Activated B cell treated with CpG ODN at 0.5 μM for 24 hours (primary cell): ENCODE measurements at regions of chr12 and their contacts with region 1.

Region 1: GRCh38 chr12:104064031-104064822 is at the start of gene HCFC2:
- DNase-seq: peak; percentile 94
- ATAC-seq: peak; percentile 95
- H3K4me3 Mint-ChIP-seq: peak within 1 kb of the TSS; percentile 97
- H3K27ac Mint-ChIP-seq: peak within 1 kb of the TSS; percentile 89
- H3K4me1 Mint-ChIP-seq: peaks cover 13% of the 10 kb centered on the region
- H3K27me3 Mint-ChIP-seq: peaks cover 9% of the 10 kb centered on the region
- CTCF ChIP-seq: no peak
- total RNA-seq, gene HCFC2: 7.4 and 11.2 TPM in 2 replicates

Region 2: GRCh38 chr12:103877934-103878510 is 186.2 kb before region 1 on chr12:
- CTCF ChIA-PET with region 1: no interaction called
- POLR2A ChIA-PET with region 1: no interaction called
- intact Hi-C with region 1: loop called (anchors 2 kb)
- DNase-seq: no peak
- ATAC-seq: peak; percentile 53
- H3K4me3 Mint-ChIP-seq: no peak overlapping the region
- H3K27ac Mint-ChIP-seq: no peak overlapping the region
- H3K4me1 Mint-ChIP-seq: peaks cover 24% of the 10 kb centered on the region
- H3K27me3 Mint-ChIP-seq: no peaks in the 10 kb centered on the region
- CTCF ChIP-seq: peak; percentile 47

Region 3: GRCh38 chr12:103965590-103966504 is 98.4 kb before region 1 on chr12 and contains the start of gene TDG:
- CTCF ChIA-PET with region 1: no interaction called
- POLR2A ChIA-PET with region 1: interaction called, 14 read pairs
- intact Hi-C with region 1: loop called (anchors 1 kb)
- DNase-seq: peak; percentile 85
- ATAC-seq: peak; percentile 95
- H3K4me3 Mint-ChIP-seq: peak within 1 kb of the TSS; percentile 97
- H3K27ac Mint-ChIP-seq: peak within 1 kb of the TSS; percentile 97
- H3K4me1 Mint-ChIP-seq: peaks cover 56% of the 10 kb centered on the region
- H3K27me3 Mint-ChIP-seq: no peaks in the 10 kb centered on the region
- CTCF ChIP-seq: no peak
- total RNA-seq, gene TDG: 31.5 and 34.2 TPM in 2 replicates

Region 4: DNA sequence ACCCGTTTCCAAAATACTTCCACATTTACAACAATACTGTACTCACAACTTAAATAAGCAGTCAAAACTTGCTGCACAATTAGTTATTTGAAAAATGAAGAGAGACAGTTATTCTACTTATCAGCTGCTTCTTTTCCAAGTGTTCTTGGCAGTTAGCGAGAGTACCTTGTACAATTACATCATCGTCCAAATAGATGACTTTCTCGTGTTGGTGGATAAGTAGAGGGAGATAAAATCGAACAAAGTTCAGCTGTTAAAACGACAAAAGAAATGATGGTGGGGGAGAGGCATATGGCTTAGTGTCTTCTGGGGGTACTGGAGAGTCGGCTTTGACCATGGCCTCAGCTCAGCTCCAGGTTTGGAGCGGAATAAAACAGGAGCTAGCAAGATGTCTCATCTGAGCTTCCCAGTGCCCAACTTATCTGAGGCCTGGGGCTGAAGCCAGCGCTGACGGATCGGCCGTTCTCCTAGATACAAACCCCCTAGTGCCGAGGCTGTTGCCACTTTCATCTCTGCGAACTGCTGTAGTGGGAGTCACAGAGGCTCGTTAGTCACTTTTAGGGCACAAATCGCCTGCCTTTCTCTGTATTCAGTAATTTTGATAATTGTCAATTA is 66.8 kb before region 1 on chr12:
- CTCF ChIA-PET with region 1: no interaction called
- POLR2A ChIA-PET with region 1: no interaction called
- intact Hi-C with region 1: no loop called
- DNase-seq: no peak
- ATAC-seq: no peak
- H3K4me3 Mint-ChIP-seq: no peak overlapping the region
- H3K27ac Mint-ChIP-seq: no peak overlapping the region
- H3K4me1 Mint-ChIP-seq: no peaks in the 10 kb centered on the region
- H3K27me3 Mint-ChIP-seq: peaks cover 21% of the 10 kb centered on the region
- CTCF ChIP-seq: no peak

Region 5: GRCh38 chr12:104022786-104023185 is 41.4 kb before region 1 on chr12:
- CTCF ChIA-PET with region 1: no interaction called
- POLR2A ChIA-PET with region 1: no interaction called
- intact Hi-C with region 1: no loop called
- DNase-seq: no peak
- ATAC-seq: no peak
- H3K4me3 Mint-ChIP-seq: no peak overlapping the region
- H3K27ac Mint-ChIP-seq: no peak overlapping the region
- H3K4me1 Mint-ChIP-seq: no peaks in the 10 kb centered on the region
- H3K27me3 Mint-ChIP-seq: peaks cover 11% of the 10 kb centered on the region
- CTCF ChIP-seq: no peak

Region 6: DNA sequence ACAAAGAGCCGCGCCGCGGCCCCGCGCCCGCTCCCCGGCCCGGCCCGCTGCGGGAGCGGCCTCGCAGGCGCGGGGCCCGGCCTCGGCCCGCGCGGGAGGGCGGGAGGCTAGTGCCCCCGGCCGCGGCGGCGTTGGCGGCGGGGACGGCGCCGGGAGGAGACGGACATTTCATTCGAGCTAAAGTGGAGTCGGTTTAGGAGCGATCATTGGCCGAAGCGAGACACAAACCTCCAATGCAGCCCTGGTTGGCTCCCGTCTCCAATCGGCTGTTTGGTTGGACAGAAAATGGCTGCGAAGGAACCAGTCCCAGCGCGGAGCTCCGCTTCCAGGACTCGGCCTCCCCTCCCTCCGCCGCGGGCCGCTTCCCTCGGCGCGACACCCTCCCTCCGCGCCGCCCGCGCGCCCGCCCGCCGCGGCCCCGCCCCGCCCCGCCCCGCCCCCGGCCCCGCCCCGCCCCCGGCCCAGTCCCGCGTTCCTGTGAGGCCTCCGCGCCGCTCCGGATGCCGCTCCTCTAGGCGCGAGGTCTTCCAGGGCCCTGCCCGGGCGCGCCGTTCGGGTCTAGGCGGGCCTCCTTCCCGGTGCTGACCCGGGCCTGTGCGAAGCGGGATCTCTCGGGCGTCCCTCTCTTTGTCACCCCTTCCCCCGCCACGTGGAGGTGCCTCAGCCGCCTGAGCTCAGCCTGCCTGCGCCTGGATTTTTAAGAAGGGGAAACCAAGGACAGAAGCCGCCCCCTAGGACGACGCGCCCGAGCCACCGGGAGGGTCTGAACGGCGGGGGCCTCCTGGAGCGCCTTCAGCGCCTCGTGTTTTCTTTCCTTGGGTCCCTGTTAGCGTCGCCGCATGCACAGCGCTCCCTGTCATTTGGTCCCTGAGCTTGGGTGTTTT is 73.9 kb after region 1 on chr12 and contains the start of gene NFYB:
- CTCF ChIA-PET with region 1: no interaction called
- POLR2A ChIA-PET with region 1: interaction called, 14 read pairs
- intact Hi-C with region 1: loop called (anchors 1 kb)
- DNase-seq: peak; percentile 90
- ATAC-seq: peak; percentile 94
- H3K4me3 Mint-ChIP-seq: peak within 1 kb of the TSS; percentile 89
- H3K27ac Mint-ChIP-seq: peak within 1 kb of the TSS; percentile 85
- H3K4me1 Mint-ChIP-seq: peaks cover 21% of the 10 kb centered on the region
- H3K27me3 Mint-ChIP-seq: no peaks in the 10 kb centered on the region
- CTCF ChIP-seq: no peak
- total RNA-seq, gene NFYB: 17.0 and 17.1 TPM in 2 replicates